CD4-positive, alpha-beta T cell (primary cell): ENCODE measurements at regions of chr7 and their contacts with region 1.

Region 1: GRCh38 chr7:42940985-42941847 is 9.0 kb downstream of the MRPL32 start:
- DNase-seq: peak; percentile 58 to 80 (median 71)
- ATAC-seq: peak; percentile 72
- H3K4me3 ChIP-seq: no peak overlapping the region
- H3K4me3 Mint-ChIP-seq: no peak overlapping the region
- H3K27ac ChIP-seq: no peak overlapping the region
- H3K27ac Mint-ChIP-seq: no peak overlapping the region
- H3K4me1 ChIP-seq: peaks cover 4% of the 10 kb centered on the region
- H3K4me1 Mint-ChIP-seq: peaks cover 4% of the 10 kb centered on the region
- H3K27me3 ChIP-seq: no peaks in the 10 kb centered on the region
- H3K27me3 Mint-ChIP-seq: no peaks in the 10 kb centered on the region
- CTCF ChIP-seq: peak; percentile 87

Region 2: DNA sequence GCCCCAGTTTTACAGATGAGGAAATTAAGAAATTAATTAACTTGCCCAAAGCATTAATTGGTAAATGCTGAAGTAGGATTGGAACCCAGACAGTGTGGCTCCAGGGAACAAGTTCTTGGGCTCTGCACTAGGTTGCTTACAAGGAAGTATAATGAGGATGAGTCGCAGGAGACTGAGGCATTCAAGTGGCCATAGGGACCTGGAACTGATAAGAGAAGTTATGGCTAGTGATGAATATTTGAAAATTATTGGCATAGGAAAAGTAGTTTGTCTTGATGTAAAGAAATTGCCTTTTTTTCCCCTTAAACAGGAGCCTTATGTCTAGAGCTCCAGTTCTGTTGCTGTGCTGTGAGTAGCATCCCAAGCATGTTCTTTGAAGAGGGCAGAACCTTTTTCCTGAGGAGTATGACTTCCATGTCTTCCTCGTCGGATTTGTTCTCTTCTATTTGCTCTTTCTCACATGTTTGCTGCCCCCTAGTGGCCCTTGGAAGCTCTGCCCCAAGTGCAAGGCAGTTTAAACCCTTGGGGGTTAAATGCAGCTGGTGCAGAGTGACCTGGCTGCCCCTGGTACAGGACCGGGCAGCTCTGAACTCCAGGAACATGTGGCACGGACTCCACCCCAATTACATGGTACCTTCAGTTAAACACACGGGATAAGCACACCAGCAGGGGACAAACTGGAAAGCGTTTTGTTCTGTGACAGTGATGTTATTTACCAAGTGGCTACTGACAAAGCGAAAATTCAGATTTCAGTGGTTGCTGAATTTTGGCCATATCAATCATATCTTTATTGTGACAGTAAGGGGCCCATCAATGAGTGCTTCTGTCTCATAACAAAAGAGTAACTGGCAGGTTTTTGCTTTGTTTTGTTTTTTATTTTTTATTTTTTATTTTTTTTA is 320.0 kb after region 1 on chr7:
- CTCF ChIA-PET with region 1: no interaction called
- POLR2A ChIA-PET with region 1: no interaction called
- intact Hi-C with region 1: loop called (anchors 2 to 10 kb)
- DNase-seq: peak; percentile 24 to 74 (median 40)
- ATAC-seq: peak; percentile 32
- H3K4me3 ChIP-seq: no peak overlapping the region
- H3K4me3 Mint-ChIP-seq: no peak overlapping the region
- H3K27ac ChIP-seq: no peak overlapping the region
- H3K27ac Mint-ChIP-seq: no peak overlapping the region
- H3K4me1 ChIP-seq: peaks cover 4% of the 10 kb centered on the region
- H3K4me1 Mint-ChIP-seq: no peaks in the 10 kb centered on the region
- H3K27me3 ChIP-seq: peaks cover 2 to 4% of the 10 kb centered on the region in 2 experiments
- H3K27me3 Mint-ChIP-seq: peaks cover 24% of the 10 kb centered on the region
- CTCF ChIP-seq: peak; percentile 89

Region 3: DNA sequence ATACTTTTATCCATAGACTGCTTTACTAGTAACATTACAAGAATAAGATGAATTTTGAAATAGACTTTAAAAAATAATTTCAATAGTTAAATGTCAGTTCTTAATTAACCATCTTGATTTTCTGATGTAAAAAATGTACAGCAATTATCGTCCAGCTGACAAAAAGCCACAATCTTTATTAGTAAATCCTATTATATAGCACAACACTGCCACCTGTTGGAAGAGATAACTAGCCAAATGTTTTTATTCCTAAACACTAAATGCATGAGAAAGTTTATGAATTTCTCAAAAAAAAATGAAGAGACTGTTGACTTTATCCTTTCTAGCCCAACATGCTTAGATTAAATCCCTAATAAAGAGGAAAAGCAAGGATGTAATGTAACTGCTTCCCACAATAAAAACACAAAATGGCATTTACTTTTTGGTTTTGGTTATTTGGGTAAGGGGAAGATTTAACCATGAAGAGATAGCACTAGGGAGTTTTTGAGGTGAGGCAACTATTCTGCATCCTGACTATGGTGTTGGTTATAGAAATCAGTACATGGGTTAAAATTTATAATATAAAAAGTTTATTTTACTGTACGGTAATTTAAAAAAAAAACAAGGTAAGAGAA is 780.1 kb after region 1 on chr7:
- CTCF ChIA-PET with region 1: interaction called, 3 read pairs
- POLR2A ChIA-PET with region 1: no interaction called
- intact Hi-C with region 1: loop called (anchors 2 kb)
- DNase-seq: peak in 4 of 14 experiments; percentile 25 to 78 (median 74)
- ATAC-seq: peak; percentile 48
- H3K4me3 ChIP-seq: no peak overlapping the region
- H3K4me3 Mint-ChIP-seq: no peak overlapping the region
- H3K27ac ChIP-seq: no peak overlapping the region
- H3K27ac Mint-ChIP-seq: peak overlapping the region; percentile 0
- H3K4me1 ChIP-seq: peaks cover 8% of the 10 kb centered on the region
- H3K4me1 Mint-ChIP-seq: peaks cover 71% of the 10 kb centered on the region
- H3K27me3 ChIP-seq: no peaks in the 10 kb centered on the region
- H3K27me3 Mint-ChIP-seq: no peaks in the 10 kb centered on the region
- CTCF ChIP-seq: peak; percentile 96